Calu3 (cell line): ENCODE measurements at regions of chr3 and their contacts with region 1.

Region 1: GRCh38 chr3:85110393-85110792 is 151.6 kb downstream of the CADM2 start:
- DNase-seq: no peak
- H3K4me3 Mint-ChIP-seq: no peak overlapping the region
- H3K27ac Mint-ChIP-seq: peak overlapping the region; percentile 34
- H3K4me1 Mint-ChIP-seq: peaks cover 13% of the 10 kb centered on the region
- H3K27me3 Mint-ChIP-seq: no peaks in the 10 kb centered on the region
- CTCF ChIP-seq: no peak

Region 2: GRCh38 chr3:84806958-84807357 is 303.4 kb before region 1 on chr3:
- CTCF ChIA-PET with region 1: no interaction called
- intact Hi-C with region 1: no loop called
- DNase-seq: no peak
- H3K4me3 Mint-ChIP-seq: no peak overlapping the region
- H3K27ac Mint-ChIP-seq: no peak overlapping the region
- H3K4me1 Mint-ChIP-seq: no peaks in the 10 kb centered on the region
- H3K27me3 Mint-ChIP-seq: no peaks in the 10 kb centered on the region
- CTCF ChIP-seq: no peak

Region 3: DNA sequence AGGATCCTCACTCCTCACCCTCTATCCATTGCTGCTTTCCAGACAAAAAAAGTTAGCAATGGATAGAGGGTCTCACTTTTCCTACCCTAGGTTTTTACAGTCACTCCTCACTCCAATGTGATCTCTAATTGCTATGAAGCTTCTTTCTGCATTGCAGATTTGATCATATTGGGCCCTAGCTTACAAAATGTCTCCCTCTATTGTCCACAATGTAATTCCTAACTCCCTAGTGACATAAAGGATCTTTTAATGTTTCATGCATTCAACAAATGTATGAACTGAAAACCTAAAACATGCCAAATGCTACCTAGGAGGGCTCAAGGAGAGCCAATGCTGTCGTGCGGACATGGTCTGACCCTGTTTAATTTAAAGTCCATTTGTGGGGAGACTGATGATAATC is 83.2 kb after region 1 on chr3:
- CTCF ChIA-PET with region 1: interaction called, 3 read pairs
- intact Hi-C with region 1: loop called (anchors 2 kb)
- DNase-seq: no peak
- H3K4me3 Mint-ChIP-seq: no peak overlapping the region
- H3K27ac Mint-ChIP-seq: no peak overlapping the region
- H3K4me1 Mint-ChIP-seq: peaks cover 10% of the 10 kb centered on the region
- H3K27me3 Mint-ChIP-seq: no peaks in the 10 kb centered on the region
- CTCF ChIP-seq: peak; percentile 19

Region 4: DNA sequence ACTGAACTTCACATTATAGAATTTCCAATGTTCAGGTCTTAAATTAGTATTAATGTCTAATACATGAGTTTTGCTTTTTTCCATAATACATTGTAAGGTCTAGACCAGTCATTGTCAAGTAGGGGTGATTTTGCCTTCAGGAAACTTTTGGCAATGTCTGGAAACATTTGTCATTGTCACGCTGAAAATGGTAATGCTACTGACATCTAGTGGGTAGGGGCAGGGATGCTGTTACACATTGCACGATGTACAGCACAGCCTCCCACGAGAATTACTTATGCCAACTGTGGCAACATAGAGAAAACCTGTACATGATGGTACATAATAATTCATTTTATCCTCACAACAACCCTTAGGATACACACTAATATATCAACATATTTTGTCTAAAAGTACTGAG is 232.5 kb after region 1 on chr3:
- CTCF ChIA-PET with region 1: no interaction called
- intact Hi-C with region 1: loop called (anchors 2 kb)
- DNase-seq: peak; percentile 32
- H3K4me3 Mint-ChIP-seq: no peak overlapping the region
- H3K27ac Mint-ChIP-seq: no peak overlapping the region
- H3K4me1 Mint-ChIP-seq: no peaks in the 10 kb centered on the region
- H3K27me3 Mint-ChIP-seq: no peaks in the 10 kb centered on the region
- CTCF ChIP-seq: peak; percentile 31